ENCODE measurements at regions of chr14 and their contacts with region 1.

Region 1: GRCh38 chr14:32939254-32940065 is 781 bp downstream of the NPAS3 start:
- DNase-seq: peak; percentile 86 to 94
- ATAC-seq: peak; percentile 94
- H3K4me3 ChIP-seq: peak overlapping the region; percentile 97 to 100
- H3K27ac ChIP-seq: peak overlapping the region in 1 of 2 donors; percentile 90
- H3K4me1 ChIP-seq: no peaks in the 10 kb centered on the region
- H3K27me3 ChIP-seq: no peaks in the 10 kb centered on the region

Region 2: DNA sequence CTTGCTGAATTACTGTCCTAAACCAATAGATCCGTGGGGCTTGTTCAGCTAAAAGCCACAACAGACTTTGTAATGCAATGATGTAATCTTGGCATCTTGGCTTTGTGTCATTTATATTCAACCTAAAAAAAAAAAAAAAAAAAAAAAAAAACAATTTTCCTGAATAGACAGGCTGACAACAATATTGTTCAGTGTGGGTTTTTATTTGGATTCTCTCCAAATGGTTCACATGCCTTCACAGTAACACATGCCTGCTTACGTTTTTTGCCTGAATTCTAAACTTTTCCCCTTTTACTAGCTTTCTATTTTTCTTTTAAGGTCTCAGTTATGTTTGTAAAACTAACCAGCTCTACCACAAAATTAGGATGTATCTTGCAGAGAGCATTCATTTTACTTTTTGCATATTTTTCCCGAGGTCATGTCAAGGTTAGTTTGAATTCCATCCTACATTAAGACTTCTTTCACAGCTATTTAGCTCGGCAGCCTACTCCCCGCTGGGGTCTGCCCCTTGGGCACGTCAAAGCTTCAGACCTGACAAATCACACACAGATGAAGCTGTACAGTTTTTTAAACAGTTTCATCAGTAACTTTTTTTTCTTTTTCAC is 214.5 kb before region 1 on chr14:
- intact Hi-C with region 1: loop called in 1 of 2 experiments (anchors 10 kb)
- DNase-seq: peak in 1 of 2 donors; percentile 25
- ATAC-seq: peak; percentile 44
- H3K4me3 ChIP-seq: peak overlapping the region; percentile 14 to 69
- H3K27ac ChIP-seq: no peak overlapping the region
- H3K4me1 ChIP-seq: peaks cover 1 to 2% of the 10 kb centered on the region in 2 donors
- H3K27me3 ChIP-seq: no peaks in the 10 kb centered on the region

Region 3: DNA sequence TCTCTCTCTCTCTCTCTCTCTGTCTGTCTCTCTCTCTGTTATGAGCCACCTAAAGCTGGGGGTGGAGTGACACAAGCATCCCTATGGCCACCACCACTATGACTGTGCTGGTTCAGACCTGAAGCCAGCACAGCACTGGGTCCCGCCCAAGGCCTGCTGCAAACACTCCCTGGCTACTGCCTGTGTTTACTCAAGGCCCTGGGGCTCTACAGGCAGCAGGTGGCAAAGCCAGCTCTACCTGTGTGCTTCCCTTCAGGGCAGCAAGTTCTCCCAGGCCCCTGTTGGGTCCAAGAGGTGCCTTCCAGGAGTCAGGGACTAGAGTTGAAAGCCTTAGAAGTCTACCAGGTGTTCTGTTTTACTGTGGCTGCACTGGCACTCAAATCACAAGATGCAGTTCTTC is 194.0 kb before region 1 on chr14:
- intact Hi-C with region 1: no loop called
- DNase-seq: no peak
- ATAC-seq: no peak
- H3K4me3 ChIP-seq: no peak overlapping the region
- H3K27ac ChIP-seq: no peak overlapping the region
- H3K4me1 ChIP-seq: peaks cover 0 to 10% of the 10 kb centered on the region in 2 donors
- H3K27me3 ChIP-seq: no peaks in the 10 kb centered on the region

Region 4: GRCh38 chr14:32998433-32998832 is 59.0 kb after region 1 on chr14:
- intact Hi-C with region 1: loop called in 1 of 2 experiments (anchors 5 kb)
- DNase-seq: no peak
- ATAC-seq: no peak
- H3K4me3 ChIP-seq: no peak overlapping the region
- H3K27ac ChIP-seq: no peak overlapping the region
- H3K4me1 ChIP-seq: no peaks in the 10 kb centered on the region
- H3K27me3 ChIP-seq: no peaks in the 10 kb centered on the region

Region 5: DNA sequence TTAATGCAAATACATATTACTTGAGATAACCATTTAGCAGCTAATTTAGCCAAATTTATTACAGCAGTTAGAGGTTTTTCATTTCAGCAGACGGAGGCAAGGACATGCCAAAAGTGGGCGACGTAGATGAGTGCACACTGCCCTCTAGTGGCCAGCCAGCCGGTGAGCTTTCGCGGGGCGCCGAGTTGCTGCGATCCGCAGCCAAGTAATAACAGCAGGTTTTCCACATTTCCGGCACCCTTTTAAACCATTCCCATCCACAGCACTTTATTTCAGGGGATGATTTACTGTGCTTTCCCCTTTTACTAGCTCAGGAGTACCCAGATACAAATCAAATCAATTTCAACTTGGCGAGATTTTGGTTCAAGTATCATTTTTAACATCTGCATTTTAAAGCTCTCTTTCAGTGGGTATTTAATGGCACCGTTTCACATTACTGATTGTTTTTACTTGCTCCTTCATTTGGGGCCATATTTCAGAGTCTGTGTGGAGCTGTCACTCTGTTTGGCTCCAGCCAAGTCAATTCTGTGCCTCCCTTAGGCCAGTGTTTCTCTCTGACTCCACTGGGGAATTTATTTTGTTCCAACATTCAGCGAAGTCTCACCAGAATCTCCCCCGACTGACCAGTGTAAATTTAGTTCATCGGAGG is 853.4 kb after region 1 on chr14:
- intact Hi-C with region 1: loop called in 1 of 2 experiments (anchors 10 kb)
- DNase-seq: peak; percentile 82 to 95
- ATAC-seq: peak; percentile 92
- H3K4me3 ChIP-seq: peak overlapping the region; percentile 18 to 65
- H3K27ac ChIP-seq: no peak overlapping the region
- H3K4me1 ChIP-seq: no peaks in the 10 kb centered on the region
- H3K27me3 ChIP-seq: no peaks in the 10 kb centered on the region